B cell (primary cell): ENCODE measurements at regions of chr16 and their contacts with region 1.

Region 1: GRCh38 chr16:27426423-27427408 is 24.7 kb downstream of the IL21R start:
- DNase-seq: peak; percentile 89
- ATAC-seq: peak; percentile 94
- H3K4me3 ChIP-seq: no peak overlapping the region
- H3K4me3 Mint-ChIP-seq: peak overlapping the region; percentile 68
- H3K27ac ChIP-seq: peak overlapping the region; percentile 74 to 83
- H3K27ac Mint-ChIP-seq: peak overlapping the region; percentile 91
- H3K4me1 ChIP-seq: peaks cover 62 to 76% of the 10 kb centered on the region in 2 donors
- H3K4me1 Mint-ChIP-seq: peaks cover 68% of the 10 kb centered on the region
- H3K27me3 ChIP-seq: no peaks in the 10 kb centered on the region
- H3K27me3 Mint-ChIP-seq: peaks cover 4% of the 10 kb centered on the region
- CTCF ChIP-seq: no peak

Region 2: GRCh38 chr16:27313422-27314160 is 113.1 kb before region 1 on chr16 and contains the start of gene IL4R:
- CTCF ChIA-PET with region 1: no interaction called
- POLR2A ChIA-PET with region 1: no interaction called
- intact Hi-C with region 1: no loop called
- DNase-seq: peak; percentile 80
- ATAC-seq: peak; percentile 61
- H3K4me3 ChIP-seq: peak within 1 kb of the TSS; percentile 83 to 98 (median 93)
- H3K4me3 Mint-ChIP-seq: peak within 1 kb of the TSS; percentile 98
- H3K27ac ChIP-seq: peak within 1 kb of the TSS; percentile 90 to 97
- H3K27ac Mint-ChIP-seq: peak within 1 kb of the TSS; percentile 97
- H3K4me1 ChIP-seq: peaks cover 40 to 53% of the 10 kb centered on the region in 2 donors
- H3K4me1 Mint-ChIP-seq: peaks cover 72% of the 10 kb centered on the region
- H3K27me3 ChIP-seq: no peaks in the 10 kb centered on the region
- H3K27me3 Mint-ChIP-seq: no peaks in the 10 kb centered on the region
- CTCF ChIP-seq: no peak
- total RNA-seq, gene IL4R: 311 and 323 TPM in 2 replicates

Region 3: DNA sequence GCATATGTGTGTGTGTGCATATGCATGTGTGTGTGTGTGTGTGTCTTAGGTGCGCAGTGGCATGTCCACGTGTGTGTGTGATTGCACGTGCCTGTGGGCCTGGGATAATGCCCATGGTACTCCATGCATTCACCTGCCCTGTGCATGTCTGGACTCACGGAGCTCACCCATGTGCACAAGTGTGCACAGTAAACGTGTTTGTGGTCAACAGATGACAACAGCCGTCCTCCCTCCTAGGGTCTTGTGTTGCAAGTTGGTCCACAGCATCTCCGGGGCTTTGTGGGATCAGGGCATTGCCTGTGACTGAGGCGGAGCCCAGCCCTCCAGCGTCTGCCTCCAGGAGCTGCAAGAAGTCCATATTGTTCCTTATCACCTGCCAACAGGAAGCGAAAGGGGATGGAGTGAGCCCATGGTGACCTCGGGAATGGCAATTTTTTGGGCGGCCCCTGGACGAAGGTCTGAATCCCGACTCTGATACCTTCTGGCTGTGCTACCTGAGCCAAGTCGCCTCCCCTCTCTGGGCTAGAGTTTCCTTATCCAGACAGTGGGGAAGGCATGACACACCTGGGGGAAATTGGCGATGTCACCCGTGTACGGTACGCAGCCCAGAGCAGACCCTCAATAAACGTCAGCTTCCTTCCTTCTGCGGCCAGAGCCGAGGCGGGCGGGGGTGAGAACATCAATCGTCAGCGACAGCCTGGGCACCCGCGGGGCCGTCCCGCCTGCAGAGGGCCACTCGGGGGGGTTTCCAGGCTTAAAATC is 22.9 kb after region 1 on chr16:
- CTCF ChIA-PET with region 1: interaction called, 11 read pairs
- POLR2A ChIA-PET with region 1: interaction called, 5 read pairs
- intact Hi-C with region 1: loop called (anchors 1 kb)
- DNase-seq: peak; percentile 93
- ATAC-seq: peak; percentile 77
- H3K4me3 ChIP-seq: peak overlapping the region in 1 of 5 experiments; percentile 17
- H3K4me3 Mint-ChIP-seq: peak overlapping the region; percentile 91
- H3K27ac ChIP-seq: peak overlapping the region; percentile 79 to 82
- H3K27ac Mint-ChIP-seq: peak overlapping the region; percentile 98
- H3K4me1 ChIP-seq: peaks cover 56 to 76% of the 10 kb centered on the region in 2 donors
- H3K4me1 Mint-ChIP-seq: peaks cover 76% of the 10 kb centered on the region
- H3K27me3 ChIP-seq: no peaks in the 10 kb centered on the region
- H3K27me3 Mint-ChIP-seq: no peaks in the 10 kb centered on the region
- CTCF ChIP-seq: no peak